CD8-positive, alpha-beta T cell (primary cell): ENCODE measurements at regions of chr1 and their contacts with region 1.

Region 1: DNA sequence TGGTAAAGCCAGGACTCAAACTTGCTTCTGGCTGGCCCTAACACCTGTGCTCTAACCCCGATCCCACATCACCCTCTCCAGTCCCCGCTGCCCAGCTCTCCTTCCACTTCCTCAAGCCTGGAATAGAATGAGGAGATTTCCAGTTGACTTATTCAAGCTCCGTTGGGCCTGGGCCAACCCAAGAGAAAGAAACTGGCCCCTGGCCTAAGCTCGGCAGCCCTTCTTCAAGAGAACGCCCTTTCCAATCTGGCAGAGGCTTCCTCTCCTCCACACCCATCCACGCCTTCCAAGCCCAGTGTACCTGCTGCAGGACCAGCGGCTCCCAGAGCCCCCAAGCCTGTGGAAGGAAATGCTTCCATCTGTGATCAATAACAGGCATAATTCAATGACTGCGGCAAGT is 51.9 kb downstream of the LRRN2 start:
- DNase-seq: no peak
- ATAC-seq: no peak
- H3K4me3 ChIP-seq: no peak overlapping the region
- H3K4me3 Mint-ChIP-seq: no peak overlapping the region
- H3K27ac ChIP-seq: no peak overlapping the region
- H3K27ac Mint-ChIP-seq: no peak overlapping the region
- H3K4me1 ChIP-seq: no peaks in the 10 kb centered on the region
- H3K4me1 Mint-ChIP-seq: no peaks in the 10 kb centered on the region
- H3K27me3 ChIP-seq: peaks cover 4 to 8% of the 10 kb centered on the region in 2 experiments
- H3K27me3 Mint-ChIP-seq: peaks cover 18% of the 10 kb centered on the region
- CTCF ChIP-seq: no peak

Region 2: DNA sequence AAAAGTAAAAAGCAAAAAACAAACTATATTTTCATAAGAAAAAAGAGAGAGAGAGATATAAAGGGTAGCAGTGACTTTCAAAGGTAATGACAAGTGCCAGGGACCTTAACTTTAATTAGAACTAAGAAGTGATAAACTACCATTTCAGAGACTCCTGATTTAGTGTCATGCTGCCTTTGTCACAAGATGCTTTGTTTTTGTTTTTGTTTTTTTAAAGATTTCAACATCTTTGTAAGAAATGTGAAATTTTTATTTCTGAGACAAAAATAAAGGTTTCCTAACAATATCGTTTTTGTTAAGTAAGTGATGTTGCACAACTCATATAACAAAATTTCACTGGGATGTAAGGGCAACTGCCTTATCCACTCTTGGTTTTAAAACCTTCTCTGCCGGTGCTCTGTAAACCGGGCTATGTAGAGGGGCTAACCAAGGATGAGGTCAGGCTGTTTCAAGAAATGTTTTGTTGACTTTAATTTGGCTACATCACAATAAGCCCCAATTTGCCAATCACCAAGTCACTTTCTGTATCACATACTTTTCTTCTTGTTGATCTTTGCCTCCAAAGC is 1888.3 kb before region 1 on chr1:
- CTCF ChIA-PET with region 1: no interaction called
- POLR2A ChIA-PET with region 1: no interaction called
- intact Hi-C with region 1: loop called in 1 of 2 experiments (anchors 5 kb)
- DNase-seq: no peak
- ATAC-seq: no peak
- H3K4me3 ChIP-seq: no peak overlapping the region
- H3K4me3 Mint-ChIP-seq: no peak overlapping the region
- H3K27ac ChIP-seq: no peak overlapping the region
- H3K27ac Mint-ChIP-seq: no peak overlapping the region
- H3K4me1 ChIP-seq: no peaks in the 10 kb centered on the region
- H3K4me1 Mint-ChIP-seq: no peaks in the 10 kb centered on the region
- H3K27me3 ChIP-seq: no peaks in the 10 kb centered on the region
- H3K27me3 Mint-ChIP-seq: no peaks in the 10 kb centered on the region
- CTCF ChIP-seq: no peak